ENCODE measurements at regions of chr10 and their contacts with region 1.

Region 1: DNA sequence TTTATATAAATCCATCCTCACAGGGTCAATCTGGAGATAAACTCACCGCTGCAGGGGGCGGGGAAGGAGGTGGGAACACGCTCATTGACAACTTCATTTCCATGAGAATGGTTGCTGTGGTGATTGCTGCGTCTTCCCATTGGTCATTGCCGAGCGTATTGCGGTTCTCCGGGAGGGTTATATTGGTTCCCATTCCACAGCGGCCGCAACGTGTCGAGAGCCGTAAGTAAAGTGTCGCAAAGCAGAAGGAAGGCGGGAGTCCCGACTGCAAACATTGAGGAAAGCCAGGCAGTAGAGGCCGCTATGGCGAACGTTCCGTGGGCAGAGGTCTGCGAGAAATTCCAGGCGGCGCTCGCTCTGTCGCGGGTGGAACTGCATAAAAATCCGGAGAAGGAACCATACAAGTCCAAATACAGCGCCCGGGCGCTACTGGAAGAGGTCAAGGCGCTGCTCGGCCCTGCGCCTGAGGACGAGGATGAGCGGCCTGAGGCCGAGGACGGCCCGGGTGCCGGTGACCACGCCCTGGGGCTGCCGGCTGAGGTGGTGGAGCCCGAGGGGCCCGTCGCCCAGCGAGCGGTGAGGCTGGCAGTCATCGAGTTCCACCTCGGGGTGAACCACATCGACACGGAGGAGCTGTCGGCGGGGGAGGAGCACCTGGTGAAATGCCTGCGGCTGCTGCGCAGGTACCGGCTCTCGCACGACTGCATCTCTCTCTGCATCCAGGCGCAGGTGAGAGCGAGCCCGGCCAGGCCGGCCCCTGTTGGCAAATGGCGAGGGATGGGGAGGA is at the start of gene KIFBP:
- DNase-seq: peak; percentile 56 to 88 (median 82)
- ATAC-seq: peak; percentile 80 to 84
- H3K4me3 Mint-ChIP-seq: peak within 1 kb of the TSS; percentile 98 to 100 (median 99)
- H3K27ac Mint-ChIP-seq: peak within 1 kb of the TSS; percentile 87 to 99 (median 96)
- H3K4me1 Mint-ChIP-seq: peaks cover 22 to 61% (median 54%) of the 10 kb centered on the region in 4 donors
- H3K27me3 Mint-ChIP-seq: no peaks in the 10 kb centered on the region
- polyA plus RNA-seq, gene KIFBP: 2.2 to 4.4 (median 2.4) TPM

Region 2: DNA sequence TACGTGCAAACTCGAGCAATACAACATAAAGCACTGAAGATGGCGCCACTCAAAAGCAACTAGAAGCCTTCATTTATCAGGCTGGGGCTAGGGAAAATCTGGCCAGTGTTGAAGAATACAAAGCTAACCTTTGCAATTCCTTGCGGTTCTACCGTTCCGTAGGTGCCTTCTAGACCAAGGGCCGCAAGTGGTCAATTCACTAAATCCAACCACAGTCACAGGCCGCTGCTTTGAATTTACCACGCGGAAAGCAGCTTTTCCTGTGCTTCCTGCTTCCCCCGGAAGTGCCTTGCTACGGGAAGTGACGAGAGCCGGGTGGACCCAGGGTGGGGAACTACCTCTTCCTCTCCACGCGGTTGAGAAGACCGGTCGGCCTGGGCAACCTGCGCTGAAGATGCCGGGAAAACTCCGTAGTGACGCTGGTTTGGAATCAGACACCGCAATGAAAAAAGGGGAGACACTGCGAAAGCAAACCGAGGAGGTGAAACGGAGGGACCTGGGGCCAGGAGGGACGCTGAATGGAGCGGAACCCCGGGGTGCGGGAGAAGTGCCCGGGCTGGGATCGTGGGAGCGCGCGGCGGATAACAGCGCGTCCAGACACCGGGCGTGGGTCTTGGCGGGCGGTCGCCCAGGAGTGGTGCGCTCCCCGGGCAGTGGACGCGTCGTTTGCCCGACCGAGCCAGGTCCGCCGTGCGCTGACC is 32.7 kb before region 1 on chr10 and contains the start of gene DDX21:
- POLR2A ChIA-PET with region 1: interaction called, 11 read pairs
- DNase-seq: peak; percentile 68 to 94 (median 88)
- ATAC-seq: peak; percentile 84 to 87
- H3K4me3 Mint-ChIP-seq: peak within 1 kb of the TSS; percentile 97 to 100 (median 99)
- H3K27ac Mint-ChIP-seq: peak within 1 kb of the TSS; percentile 96 to 100 (median 100)
- H3K4me1 Mint-ChIP-seq: peaks cover 11 to 48% (median 40%) of the 10 kb centered on the region in 4 donors
- H3K27me3 Mint-ChIP-seq: no peaks in the 10 kb centered on the region
- polyA plus RNA-seq, gene DDX21: 14.6 to 19.1 (median 15.4) TPM

Region 3: GRCh38 chr10:68973975-68974374 is 14.7 kb before region 1 on chr10:
- POLR2A ChIA-PET with region 1: no interaction called
- DNase-seq: no peak
- ATAC-seq: no peak
- H3K4me3 Mint-ChIP-seq: no peak overlapping the region
- H3K27ac Mint-ChIP-seq: no peak overlapping the region
- H3K4me1 Mint-ChIP-seq: peaks cover 2 to 17% (median 13%) of the 10 kb centered on the region in 4 donors
- H3K27me3 Mint-ChIP-seq: no peaks in the 10 kb centered on the region